ENCODE measurements at regions of chr5 and their contacts with region 1.

Region 1: DNA sequence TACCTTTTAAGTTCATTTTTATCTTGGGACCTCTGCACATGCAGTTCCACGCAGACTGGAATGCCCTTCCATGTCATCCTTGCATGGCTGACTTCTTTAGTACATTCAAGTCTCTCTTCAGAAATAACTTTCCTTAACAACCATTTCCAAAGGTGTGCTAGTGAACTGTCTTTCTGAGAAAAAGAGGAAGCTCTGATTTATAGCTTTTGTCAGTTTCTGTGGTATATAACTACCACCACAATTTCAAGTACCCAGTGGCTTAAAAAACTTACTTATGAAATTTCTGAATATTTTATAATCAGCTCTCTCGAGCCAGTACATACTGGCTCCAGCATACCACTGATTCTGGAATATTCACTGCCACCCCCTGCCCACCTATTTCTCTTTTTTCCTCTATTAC is 1613.8 kb downstream of the MAT2B start:
- DNase-seq: no peak
- ATAC-seq: no peak
- H3K4me3 ChIP-seq: no peak overlapping the region
- H3K27ac ChIP-seq: no peak overlapping the region
- H3K4me1 ChIP-seq: no peaks in the 10 kb centered on the region
- H3K27me3 ChIP-seq: no peaks in the 10 kb centered on the region

Region 2: DNA sequence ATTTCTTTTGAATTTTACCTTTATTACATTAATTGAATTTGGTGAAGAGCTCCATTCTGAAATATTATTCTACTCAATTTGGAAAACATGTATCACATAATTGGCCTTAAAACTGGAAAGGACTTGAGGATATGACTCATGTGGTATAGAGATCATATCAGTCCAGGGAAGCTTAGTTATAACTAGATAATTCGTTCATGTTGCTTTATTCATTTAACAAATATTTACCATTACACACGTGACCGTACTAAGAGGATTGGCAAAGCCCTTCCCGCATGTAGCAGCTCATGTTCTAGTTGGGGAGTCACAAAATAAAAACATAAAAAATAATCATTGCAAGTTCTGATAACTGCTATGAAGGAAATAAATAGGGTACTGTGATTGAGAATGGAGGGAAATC is 202.7 kb after region 1 on chr5:
- intact Hi-C with region 1: loop called in 1 of 4 experiments (anchors 5 kb)
- DNase-seq: no peak
- ATAC-seq: no peak
- H3K4me3 ChIP-seq: no peak overlapping the region
- H3K27ac ChIP-seq: no peak overlapping the region
- H3K4me1 ChIP-seq: no peaks in the 10 kb centered on the region
- H3K27me3 ChIP-seq: no peaks in the 10 kb centered on the region

Measured in right cardiac atrium (tissue), 5 donors.